Sigmoid colon (tissue), 7 donors: ENCODE measurements at regions of chr6 and their contacts with region 1.

Region 1: DNA sequence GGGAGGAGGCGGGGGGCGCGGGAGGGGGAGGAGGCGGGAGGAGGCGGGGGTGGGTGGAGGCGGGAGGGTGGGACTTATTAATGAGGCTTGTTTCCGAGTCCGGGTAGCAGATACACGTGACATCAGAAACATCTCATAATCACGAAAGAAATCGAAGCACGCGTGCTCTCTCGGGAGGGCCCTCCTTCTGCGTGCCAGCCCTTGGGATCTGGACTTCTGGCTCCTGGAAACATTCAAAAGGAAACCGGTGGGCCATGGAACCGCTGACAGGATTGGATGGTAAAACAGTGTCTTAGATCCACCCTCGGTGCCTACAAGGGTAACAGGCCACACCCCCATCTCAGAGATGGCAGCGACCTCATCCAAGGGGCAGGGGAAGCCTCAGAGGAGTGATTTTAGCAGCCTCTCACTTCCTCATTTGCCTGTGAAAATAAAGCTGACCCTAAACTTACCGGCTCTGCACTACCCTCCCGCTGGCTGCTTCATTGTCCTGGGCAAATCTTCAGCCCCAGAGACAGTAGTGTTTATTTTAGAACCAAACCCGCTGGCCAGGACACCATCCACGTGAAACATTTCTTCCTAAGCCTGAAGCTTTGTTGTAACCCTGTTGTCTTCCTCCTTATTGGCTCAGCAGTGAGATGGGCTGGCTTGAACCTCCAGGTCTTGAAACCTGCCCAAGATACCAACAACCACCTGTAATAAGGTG is 97.5 kb downstream of the PSMG4 start:
- DNase-seq: peak; percentile 91
- H3K4me3 ChIP-seq: peak overlapping the region; percentile 24 to 46 (median 40)
- H3K27ac ChIP-seq: peak overlapping the region; percentile 87 to 94 (median 92)
- H3K4me1 ChIP-seq: peaks cover 0 to 46% (median 38%) of the 10 kb centered on the region in 4 donors
- H3K27me3 ChIP-seq: no peaks in the 10 kb centered on the region
- CTCF ChIP-seq: no peak
- EP300 ChIP-seq: peak in 1 of 4 donors; percentile 41
- POLR2A ChIP-seq: no peak

Region 2: DNA sequence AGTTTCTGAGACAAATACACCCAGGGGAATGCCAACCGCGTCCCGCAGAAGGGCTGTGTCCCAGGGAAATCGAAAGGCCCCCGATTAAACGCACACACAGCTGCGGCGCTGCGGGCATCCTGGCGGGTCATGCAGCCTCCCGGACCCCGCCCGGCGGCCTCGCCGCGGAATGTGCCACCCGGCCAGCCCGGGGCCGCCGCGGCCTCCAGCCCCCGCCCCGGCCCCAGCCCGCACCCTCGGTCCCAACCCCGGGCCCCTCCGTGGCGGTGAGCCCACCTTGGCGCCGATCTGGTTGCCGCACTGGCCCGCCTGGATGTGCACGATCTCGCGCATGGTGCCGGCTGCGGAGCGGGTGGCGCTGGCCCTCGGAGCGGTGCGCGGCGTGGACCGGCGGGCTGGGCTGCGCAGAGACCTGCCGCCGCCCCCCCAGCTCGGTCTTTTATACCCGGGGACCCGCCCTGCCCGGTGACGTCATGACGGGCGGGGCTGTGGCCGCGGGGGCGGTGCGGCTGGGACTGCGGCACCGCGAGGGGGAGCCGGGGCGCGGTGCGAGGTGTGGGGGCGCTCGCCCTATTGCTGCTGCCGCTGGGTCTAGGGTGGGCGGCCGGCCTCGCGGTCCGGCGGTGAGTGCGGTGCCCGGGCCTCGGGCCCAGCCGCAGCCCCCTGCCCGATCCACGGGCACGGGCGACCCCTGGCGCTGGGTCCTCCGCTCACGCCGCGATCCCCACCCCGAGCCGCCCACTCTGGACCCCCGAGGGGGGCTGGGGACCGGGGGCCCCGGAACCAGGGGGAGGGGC is 198.9 kb before region 1 on chr6 and contains the start of gene TUBB2A:
- intact Hi-C with region 1: loop called (anchors 5 kb)
- DNase-seq: peak; percentile 95
- H3K4me3 ChIP-seq: peak within 1 kb of the TSS; percentile 66 to 99 (median 71)
- H3K27ac ChIP-seq: peak within 1 kb of the TSS; percentile 90 to 99 (median 96)
- H3K4me1 ChIP-seq: peaks cover 0 to 34% (median 14%) of the 10 kb centered on the region in 4 donors
- H3K27me3 ChIP-seq: no peaks in the 10 kb centered on the region
- CTCF ChIP-seq: peak in 2 of 4 experiments; percentile 12 to 52
- EP300 ChIP-seq: peak in 1 of 4 donors; percentile 45
- POLR2A ChIP-seq: peak; percentile 56 to 81
- total RNA-seq, gene TUBB2A: 54.5 to 106 (median 97.9) TPM

Region 3: GRCh38 chr6:3281631-3282475 is 74.4 kb before region 1 on chr6:
- intact Hi-C with region 1: loop called (anchors 5 kb)
- DNase-seq: peak; percentile 66
- H3K4me3 ChIP-seq: no peak overlapping the region
- H3K27ac ChIP-seq: peak overlapping the region; percentile 38 to 75 (median 71)
- H3K4me1 ChIP-seq: peaks cover 0 to 55% (median 40%) of the 10 kb centered on the region in 4 donors
- H3K27me3 ChIP-seq: no peaks in the 10 kb centered on the region
- CTCF ChIP-seq: no peak
- EP300 ChIP-seq: no peak
- POLR2A ChIP-seq: no peak

Region 4: GRCh38 chr6:3732345-3733141 is 376.3 kb after region 1 on chr6:
- intact Hi-C with region 1: loop called (anchors 5 kb)
- DNase-seq: peak; percentile 89
- H3K4me3 ChIP-seq: no peak overlapping the region
- H3K27ac ChIP-seq: no peak overlapping the region
- H3K4me1 ChIP-seq: peaks cover 0 to 34% (median 22%) of the 10 kb centered on the region in 4 donors
- H3K27me3 ChIP-seq: no peaks in the 10 kb centered on the region
- CTCF ChIP-seq: peak; percentile 83 to 89 (median 86)
- EP300 ChIP-seq: no peak
- POLR2A ChIP-seq: no peak

Region 5: DNA sequence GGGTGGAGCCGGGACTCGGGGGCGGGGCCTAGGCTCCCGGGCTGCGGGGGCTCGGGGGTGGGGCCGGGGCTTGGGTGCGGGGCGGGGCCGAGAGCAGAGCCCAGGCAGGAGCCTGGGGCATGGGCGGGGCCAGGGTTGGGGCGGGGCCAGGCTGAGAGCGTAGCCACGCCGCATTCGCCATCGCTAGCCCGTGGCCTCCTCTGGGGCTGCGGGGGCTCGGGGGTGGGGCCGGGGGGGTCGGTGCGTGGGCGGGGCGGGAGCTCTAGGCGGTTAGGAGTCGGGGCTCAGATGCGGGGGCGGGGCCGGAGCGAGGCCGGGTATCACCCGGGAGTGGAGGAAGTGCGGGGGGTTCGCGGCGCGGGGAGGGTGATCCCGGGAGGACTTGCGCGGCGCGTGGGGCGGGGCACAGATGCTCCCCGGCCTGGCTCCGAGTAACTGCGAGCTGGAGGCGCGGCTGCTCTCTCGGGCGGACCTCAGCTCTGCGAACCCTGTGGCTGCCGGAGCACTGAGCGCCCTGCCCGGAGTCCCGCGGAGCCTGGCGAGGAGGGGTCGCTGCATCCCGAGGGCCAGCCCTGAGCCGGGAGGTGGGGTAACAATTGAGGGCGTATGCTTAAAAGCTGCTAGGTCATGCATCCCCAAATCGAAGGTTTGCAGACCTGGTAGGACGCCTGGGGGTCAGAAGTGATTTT is 779.6 kb after region 1 on chr6:
- intact Hi-C with region 1: loop called (anchors 10 kb)
- DNase-seq: peak; percentile 100
- H3K4me3 ChIP-seq: peak overlapping the region; percentile 66 to 93 (median 80)
- H3K27ac ChIP-seq: peak overlapping the region; percentile 90 to 97 (median 93)
- H3K4me1 ChIP-seq: peaks cover 0 to 24% (median 21%) of the 10 kb centered on the region in 4 donors
- H3K27me3 ChIP-seq: no peaks in the 10 kb centered on the region
- CTCF ChIP-seq: peak in 1 of 4 experiments; percentile 9
- EP300 ChIP-seq: no peak
- POLR2A ChIP-seq: peak in 1 of 2 donors; percentile 22